ENCODE measurements at regions of chr11 and their contacts with region 1.

Region 1: GRCh38 chr11:120108154-120108865 is 29.6 kb downstream of the TRIM29 start:
- DNase-seq: peak; percentile 78 to 91
- H3K4me3 ChIP-seq: no peak overlapping the region
- H3K4me3 Mint-ChIP-seq: no peak overlapping the region
- H3K27ac Mint-ChIP-seq: no peak overlapping the region
- H3K4me1 ChIP-seq: peaks cover 4% of the 10 kb centered on the region; the same call in 1 of the 2 replicates
- H3K4me1 Mint-ChIP-seq: no peaks in the 10 kb centered on the region
- H3K27me3 ChIP-seq: no peaks in the 10 kb centered on the region
- H3K27me3 Mint-ChIP-seq: peaks cover 17% of the 10 kb centered on the region
- CTCF ChIP-seq: peak; percentile 100

Region 2: GRCh38 chr11:119481021-119481666 is 627.2 kb before region 1 on chr11:
- CTCF ChIA-PET with region 1: no interaction called
- POLR2A ChIA-PET with region 1: no interaction called
- intact Hi-C with region 1: loop called (anchors 1 kb)
- DNase-seq: peak; percentile 93 to 99
- H3K4me3 ChIP-seq: no peak overlapping the region
- H3K4me3 Mint-ChIP-seq: no peak overlapping the region
- H3K27ac Mint-ChIP-seq: peak overlapping the region; percentile 16
- H3K4me1 ChIP-seq: peaks cover 5% of the 10 kb centered on the region; the same call in 1 of the 2 replicates
- H3K4me1 Mint-ChIP-seq: peaks cover 8% of the 10 kb centered on the region
- H3K27me3 ChIP-seq: no peaks in the 10 kb centered on the region; the same call in 1 of the 2 replicates
- H3K27me3 Mint-ChIP-seq: peaks cover 13% of the 10 kb centered on the region
- CTCF ChIP-seq: peak; percentile 99 to 100

Region 3: DNA sequence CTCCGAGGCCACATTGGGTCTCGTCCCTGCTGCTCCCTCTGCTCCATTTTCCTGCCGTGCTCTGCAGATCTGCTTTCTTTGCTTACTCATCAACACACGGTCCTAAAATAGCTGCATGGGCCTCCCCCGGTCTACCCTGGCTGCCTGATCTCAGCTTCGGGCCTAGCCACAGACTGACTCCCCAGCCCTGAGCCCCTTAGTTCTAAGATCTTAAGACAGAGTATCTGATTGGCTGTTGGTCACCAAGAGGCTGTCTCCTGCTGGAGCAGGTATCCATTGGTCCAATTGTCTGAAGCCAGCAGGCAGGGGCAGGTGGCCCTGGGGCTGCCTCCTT is 325.6 kb before region 1 on chr11:
- CTCF ChIA-PET with region 1: no interaction called
- POLR2A ChIA-PET with region 1: no interaction called
- intact Hi-C with region 1: loop called (anchors 5 kb)
- DNase-seq: no peak
- H3K4me3 ChIP-seq: no peak overlapping the region
- H3K4me3 Mint-ChIP-seq: no peak overlapping the region
- H3K27ac Mint-ChIP-seq: no peak overlapping the region
- H3K4me1 ChIP-seq: no peaks in the 10 kb centered on the region
- H3K4me1 Mint-ChIP-seq: no peaks in the 10 kb centered on the region
- H3K27me3 ChIP-seq: no peaks in the 10 kb centered on the region; the same call in 1 of the 2 replicates
- H3K27me3 Mint-ChIP-seq: peaks cover 7% of the 10 kb centered on the region
- CTCF ChIP-seq: no peak

Region 4: DNA sequence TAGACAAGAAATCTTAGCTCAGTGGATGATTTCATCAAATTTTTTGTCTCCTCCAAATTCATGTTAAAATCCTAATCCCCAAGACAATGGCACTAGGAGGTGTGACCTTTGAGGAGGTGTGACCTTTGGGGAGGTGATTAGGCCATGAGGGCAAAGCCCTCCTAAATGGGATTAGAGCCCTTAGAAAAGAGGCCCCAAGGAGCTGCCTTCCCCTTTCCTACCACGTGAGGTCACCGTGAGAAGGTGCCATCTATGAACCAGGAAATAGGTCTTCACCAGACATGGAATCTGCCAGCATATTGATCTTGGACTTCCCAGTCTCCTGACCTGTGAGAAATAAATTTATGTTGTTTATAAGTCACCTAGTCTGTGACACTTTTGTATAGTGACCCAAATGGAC is 109.1 kb before region 1 on chr11:
- CTCF ChIA-PET with region 1: interaction called, 18 read pairs
- POLR2A ChIA-PET with region 1: no interaction called
- intact Hi-C with region 1: loop called (anchors 1 kb)
- DNase-seq: peak in 1 of 2 experiments; percentile 52
- H3K4me3 ChIP-seq: no peak overlapping the region
- H3K4me3 Mint-ChIP-seq: no peak overlapping the region
- H3K27ac Mint-ChIP-seq: no peak overlapping the region
- H3K4me1 ChIP-seq: no peaks in the 10 kb centered on the region
- H3K4me1 Mint-ChIP-seq: no peaks in the 10 kb centered on the region
- H3K27me3 ChIP-seq: no peaks in the 10 kb centered on the region
- H3K27me3 Mint-ChIP-seq: peaks cover 9% of the 10 kb centered on the region
- CTCF ChIP-seq: peak; percentile 46 to 68

Region 5: GRCh38 chr11:120172054-120172911 is 64.0 kb after region 1 on chr11:
- CTCF ChIA-PET with region 1: interaction called, 14 read pairs
- POLR2A ChIA-PET with region 1: no interaction called
- intact Hi-C with region 1: no loop called
- DNase-seq: peak; percentile 87 to 88
- H3K4me3 ChIP-seq: no peak overlapping the region
- H3K4me3 Mint-ChIP-seq: no peak overlapping the region
- H3K27ac Mint-ChIP-seq: no peak overlapping the region
- H3K4me1 ChIP-seq: peaks cover 8% of the 10 kb centered on the region
- H3K4me1 Mint-ChIP-seq: no peaks in the 10 kb centered on the region
- H3K27me3 ChIP-seq: no peaks in the 10 kb centered on the region
- H3K27me3 Mint-ChIP-seq: peaks cover 9% of the 10 kb centered on the region
- CTCF ChIP-seq: peak; percentile 95 to 98